HepG2 (cell line): ENCODE measurements at regions of chr11 and their contacts with region 1.

Region 1: GRCh38 chr11:63974259-63975143 is at the start of gene COX8A:
- DNase-seq: peak; percentile 99
- ATAC-seq: peak; percentile 93
- H3K4me3 ChIP-seq: peak within 1 kb of the TSS; percentile 87 to 93 (median 91)
- H3K27ac ChIP-seq: peak within 1 kb of the TSS; percentile 80
- H3K4me1 ChIP-seq: peaks cover 49% of the 10 kb centered on the region
- H3K27me3 ChIP-seq: peaks cover 0 to 1% of the 10 kb centered on the region in 2 experiments; a peak in 2 of 5 replicates
- CTCF ChIP-seq: peak; percentile 33
- EP300 ChIP-seq: peak in 1 of 2 experiments; percentile 29; a peak in 2 of 4 replicates
- POLR2A ChIP-seq: peak; percentile 78 to 88
- RAD21 ChIP-seq: peak; percentile 39; the same call in 1 of the 2 replicates
- total RNA-seq, gene COX8A: 393 and 406 TPM in 2 replicates

Region 2: DNA sequence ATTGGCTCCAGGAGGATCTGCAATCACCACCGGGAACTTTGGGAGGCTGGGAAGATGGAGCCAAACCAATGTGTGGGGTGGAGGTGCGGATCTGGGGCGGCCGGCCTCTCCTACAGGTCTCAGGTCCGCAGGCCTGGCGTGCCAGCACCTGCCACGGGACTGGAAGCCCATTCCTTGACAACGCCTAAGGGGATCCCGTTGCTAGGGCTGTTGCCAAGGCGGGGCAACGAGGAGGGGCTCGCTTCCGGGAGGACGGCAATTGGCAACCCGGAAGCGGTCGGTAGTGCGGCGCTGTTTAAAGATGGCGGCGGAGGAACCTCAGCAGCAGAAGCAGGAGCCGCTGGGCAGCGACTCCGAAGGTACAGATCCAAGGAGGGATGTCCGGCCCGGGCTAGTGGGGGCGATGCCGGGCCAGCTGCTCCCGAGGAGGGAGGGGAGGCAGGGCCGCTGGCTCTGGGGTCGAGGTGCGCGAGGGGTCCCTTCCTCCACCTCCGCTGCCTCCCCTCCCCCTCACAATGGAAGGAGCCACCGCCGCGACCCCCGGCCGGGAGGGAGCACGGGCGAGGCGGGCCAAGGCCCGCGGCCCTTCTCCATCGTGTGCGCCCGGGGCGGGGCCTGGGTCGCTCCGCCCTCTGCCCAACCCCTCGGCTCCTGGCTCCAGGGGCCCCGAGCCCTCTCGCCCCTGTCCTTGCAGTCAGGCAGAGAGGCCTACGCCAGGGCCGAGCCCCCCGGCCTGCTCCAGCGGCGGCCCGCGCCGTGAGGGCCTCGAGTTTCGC is 11.8 kb after region 1 on chr11 and contains the start of gene OTUB1:
- CTCF ChIA-PET with region 1: no interaction called
- POLR2A ChIA-PET with region 1: interaction called, 12 read pairs
- in situ Hi-C with region 1: no loop called
- intact Hi-C with region 1: no loop called
- DNase-seq: peak; percentile 93
- ATAC-seq: peak; percentile 94
- H3K4me3 ChIP-seq: peak within 1 kb of the TSS; percentile 87 to 97 (median 95)
- H3K27ac ChIP-seq: peak within 1 kb of the TSS; percentile 89
- H3K4me1 ChIP-seq: peaks cover 19% of the 10 kb centered on the region
- H3K27me3 ChIP-seq: no peaks in the 10 kb centered on the region
- CTCF ChIP-seq: no peak; the same call in 1 of the 2 replicates
- EP300 ChIP-seq: no peak
- POLR2A ChIP-seq: peak; percentile 81 to 87
- RAD21 ChIP-seq: peak; percentile 40; the same call in 1 of the 2 replicates
- total RNA-seq, gene OTUB1: 58.8 and 78.7 TPM in 2 replicates

Region 3: GRCh38 chr11:64007629-64008282 is 33.3 kb after region 1 on chr11:
- CTCF ChIA-PET with region 1: no interaction called
- POLR2A ChIA-PET with region 1: interaction called, 5 read pairs
- in situ Hi-C with region 1: no loop called
- intact Hi-C with region 1: loop called (anchors 1 kb)
- DNase-seq: peak; percentile 89
- ATAC-seq: peak; percentile 90
- H3K4me3 ChIP-seq: peak overlapping the region; percentile 19 to 70 (median 60); a peak in 5 of 6 replicates
- H3K27ac ChIP-seq: no peak overlapping the region
- H3K4me1 ChIP-seq: peaks cover 21% of the 10 kb centered on the region
- H3K27me3 ChIP-seq: no peaks in the 10 kb centered on the region
- CTCF ChIP-seq: peak; percentile 59
- EP300 ChIP-seq: no peak
- POLR2A ChIP-seq: peak in 1 of 2 experiments; percentile 70; a peak in 2 of 4 replicates
- RAD21 ChIP-seq: peak; percentile 20; the same call in 1 of the 2 replicates